ENCODE measurements at regions of chr15 and their contacts with region 1.

Region 1: GRCh38 chr15:100918034-100918689 is 995 bp upstream of the LRRK1 start:
- DNase-seq: peak; percentile 92 to 97
- ATAC-seq: peak; percentile 81 to 94
- H3K4me3 ChIP-seq: peak overlapping the region; percentile 79
- H3K27ac ChIP-seq: peak overlapping the region; percentile 94 to 95
- H3K4me1 ChIP-seq: peaks cover 17% of the 10 kb centered on the region
- CTCF ChIP-seq: peak; percentile 97
- EP300 ChIP-seq: no peak
- POLR2A ChIP-seq: peak; percentile 55
- RAD21 ChIP-seq: peak; percentile 90 to 97

Region 2: DNA sequence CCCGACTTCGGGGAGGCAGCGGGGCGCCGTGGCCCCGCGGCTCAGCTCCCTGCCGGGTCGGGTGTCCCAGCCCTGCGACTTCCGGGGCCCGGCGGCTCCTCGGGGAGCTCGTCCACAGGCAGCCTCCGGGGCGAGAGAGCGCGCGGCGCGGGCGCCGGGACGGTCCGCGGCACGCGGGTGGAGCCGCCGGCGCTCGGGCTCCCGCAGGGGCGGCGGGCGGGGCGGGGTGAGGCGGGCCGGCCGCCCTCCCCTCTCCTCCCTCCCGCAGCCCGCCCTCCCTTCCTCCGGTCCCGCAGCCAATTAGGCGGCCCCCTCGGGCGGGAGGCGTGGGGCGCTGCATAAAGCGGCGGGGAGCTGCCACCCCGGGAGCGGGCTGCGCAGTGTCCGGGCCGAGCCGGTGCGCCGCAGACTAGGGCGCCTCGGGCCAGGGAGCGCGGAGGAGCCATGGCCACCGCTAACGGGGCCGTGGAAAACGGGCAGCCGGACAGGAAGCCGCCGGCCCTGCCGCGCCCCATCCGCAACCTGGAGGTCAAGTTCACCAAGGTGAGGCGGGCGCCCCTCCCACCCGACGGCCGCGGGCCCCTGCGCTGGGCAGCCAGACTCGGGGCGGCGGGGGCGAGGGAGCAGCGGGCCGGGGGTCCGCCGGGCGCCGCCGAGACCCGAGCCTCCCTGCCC is 38.6 kb before region 1 on chr15 and contains the start of gene ALDH1A3:
- CTCF ChIA-PET with region 1: interaction called, 27 read pairs
- POLR2A ChIA-PET with region 1: no interaction called
- DNase-seq: peak; percentile 65 to 89
- ATAC-seq: peak; percentile 81 to 91
- H3K4me3 ChIP-seq: peak within 1 kb of the TSS; percentile 75
- H3K27ac ChIP-seq: peak within 1 kb of the TSS; percentile 84 to 91
- H3K4me1 ChIP-seq: peaks cover 5% of the 10 kb centered on the region
- CTCF ChIP-seq: no peak
- EP300 ChIP-seq: no peak
- POLR2A ChIP-seq: peak; percentile 84
- RAD21 ChIP-seq: no peak; a peak in 1 of 5 replicates
- polyA plus RNA-seq, gene ALDH1A3: 9.3 and 11.9 TPM in 2 replicates

Region 3: DNA sequence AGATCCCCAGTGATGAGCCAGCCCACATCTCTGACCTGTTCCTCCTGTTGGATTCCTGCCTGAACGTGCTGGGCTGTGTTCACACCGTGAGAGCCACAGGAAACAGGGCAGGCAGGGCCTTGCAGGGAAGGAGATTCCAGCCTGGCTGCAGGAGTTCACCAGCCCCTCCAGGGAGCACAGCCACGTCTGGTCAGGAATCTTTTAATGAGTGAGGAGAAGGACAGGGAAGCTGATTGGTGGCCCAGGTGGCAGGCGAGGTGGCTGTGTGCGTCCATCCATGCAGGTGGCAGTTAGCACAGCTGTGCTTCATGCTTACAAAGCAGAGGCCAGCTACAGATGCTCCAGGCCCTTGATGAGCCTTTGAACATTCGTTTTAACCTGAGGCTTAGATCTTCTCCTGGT is 11.5 kb after region 1 on chr15:
- CTCF ChIA-PET with region 1: interaction called, 65 read pairs
- POLR2A ChIA-PET with region 1: interaction called, 3 read pairs
- DNase-seq: no peak
- ATAC-seq: no peak; a peak in 2 of 6 replicates
- H3K4me3 ChIP-seq: no peak overlapping the region
- H3K27ac ChIP-seq: no peak overlapping the region
- H3K4me1 ChIP-seq: peaks cover 9% of the 10 kb centered on the region; the same call in 2 of the 3 replicates
- CTCF ChIP-seq: no peak
- EP300 ChIP-seq: no peak
- POLR2A ChIP-seq: no peak
- RAD21 ChIP-seq: no peak

Region 4: DNA sequence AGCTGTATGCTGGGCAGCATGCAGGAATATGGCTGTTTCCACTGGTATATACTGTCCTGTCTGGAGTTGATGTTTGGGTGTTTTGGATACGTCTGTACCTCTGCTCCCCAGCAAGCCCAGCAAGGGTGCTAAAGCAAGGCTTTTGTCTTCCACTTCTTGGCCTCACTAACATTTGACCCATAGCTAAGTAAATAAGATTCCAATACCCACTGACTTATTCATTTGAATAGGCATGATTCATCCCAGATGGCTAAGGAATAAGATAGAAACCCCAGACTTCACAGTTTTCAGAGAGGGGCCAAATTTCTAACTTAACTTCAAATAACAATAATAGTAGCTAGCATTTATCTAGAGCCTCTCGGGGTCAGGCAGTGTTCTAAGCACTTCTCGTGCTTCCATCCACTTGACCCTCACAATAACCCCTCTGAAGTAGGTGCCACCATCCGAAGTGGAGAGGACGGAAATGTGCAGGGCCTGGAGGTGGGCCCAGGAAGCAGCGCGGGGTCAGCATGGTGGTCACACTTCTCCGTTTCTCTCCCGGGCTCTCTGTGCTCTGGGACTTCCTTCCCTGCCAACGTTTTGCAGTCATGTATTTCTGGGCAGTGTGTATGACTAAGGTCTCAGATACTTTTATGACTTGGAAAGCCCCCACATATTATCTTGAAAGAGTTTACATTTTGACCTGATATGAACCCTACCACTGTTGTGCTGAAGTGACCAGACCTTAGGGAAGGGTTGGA is 40.3 kb after region 1 on chr15:
- CTCF ChIA-PET with region 1: interaction called, 63 read pairs
- POLR2A ChIA-PET with region 1: interaction called, 43 read pairs
- DNase-seq: peak; percentile 77 to 90
- ATAC-seq: peak; percentile 84 to 90
- H3K4me3 ChIP-seq: peak overlapping the region; percentile 30
- H3K27ac ChIP-seq: peak overlapping the region; percentile 81 to 93
- H3K4me1 ChIP-seq: peaks cover 42% of the 10 kb centered on the region
- CTCF ChIP-seq: no peak
- EP300 ChIP-seq: peak; percentile 27 to 59; a peak in 2 of 5 replicates
- POLR2A ChIP-seq: peak; percentile 32
- RAD21 ChIP-seq: peak; percentile 14 to 20; a peak in 2 of 5 replicates

Region 5: DNA sequence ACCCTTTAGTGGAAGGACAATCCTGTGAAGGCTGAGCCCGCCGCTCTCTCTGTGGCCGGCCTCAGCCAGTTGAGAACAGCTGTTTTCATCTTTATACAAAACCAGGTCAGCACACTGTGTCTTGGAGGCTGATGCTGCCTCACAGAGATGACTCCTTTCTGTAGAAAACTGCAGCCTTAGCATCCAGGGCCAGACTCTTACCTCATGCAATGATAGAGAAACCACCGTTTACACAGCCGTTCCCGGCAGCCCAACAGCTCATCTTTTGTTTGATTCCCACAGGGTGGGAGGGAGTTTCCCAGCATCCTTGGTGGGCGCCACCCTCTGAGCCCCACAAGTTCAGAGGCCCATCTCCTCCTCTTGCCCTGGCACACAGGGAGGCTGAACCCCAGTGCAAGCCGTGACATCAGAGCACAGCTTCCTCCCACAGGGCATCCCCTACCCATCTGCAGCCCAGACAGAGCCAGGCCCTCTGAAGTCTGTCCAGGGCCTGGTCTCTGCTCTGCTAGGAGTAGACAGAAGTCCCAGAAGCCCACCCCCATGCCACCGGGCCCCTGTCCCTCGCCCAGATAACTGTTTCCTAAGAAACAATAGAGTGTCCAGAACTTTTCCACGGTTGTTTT is 106.0 kb after region 1 on chr15:
- CTCF ChIA-PET with region 1: interaction called, 19 read pairs
- POLR2A ChIA-PET with region 1: no interaction called
- DNase-seq: no peak
- ATAC-seq: no peak; a peak in 1 of 6 replicates
- H3K4me3 ChIP-seq: no peak overlapping the region
- H3K27ac ChIP-seq: no peak overlapping the region
- H3K4me1 ChIP-seq: no peaks in the 10 kb centered on the region
- CTCF ChIP-seq: no peak
- EP300 ChIP-seq: no peak
- POLR2A ChIP-seq: no peak
- RAD21 ChIP-seq: no peak